Left ventricle myocardium superior (tissue), 1 donor: ENCODE measurements at regions of chr9 and their contacts with region 1.

Region 1: GRCh38 chr9:137129456-137130175 is 9.3 kb upstream of the GRIN1 start:
- DNase-seq: peak; percentile 95
- ATAC-seq: peak; percentile 99

Region 2: GRCh38 chr9:137236238-137236935 is 106.8 kb after region 1 on chr9:
- intact Hi-C with region 1: loop called (anchors 10 kb)
- DNase-seq: peak; percentile 92
- ATAC-seq: peak; percentile 37

Region 3: DNA sequence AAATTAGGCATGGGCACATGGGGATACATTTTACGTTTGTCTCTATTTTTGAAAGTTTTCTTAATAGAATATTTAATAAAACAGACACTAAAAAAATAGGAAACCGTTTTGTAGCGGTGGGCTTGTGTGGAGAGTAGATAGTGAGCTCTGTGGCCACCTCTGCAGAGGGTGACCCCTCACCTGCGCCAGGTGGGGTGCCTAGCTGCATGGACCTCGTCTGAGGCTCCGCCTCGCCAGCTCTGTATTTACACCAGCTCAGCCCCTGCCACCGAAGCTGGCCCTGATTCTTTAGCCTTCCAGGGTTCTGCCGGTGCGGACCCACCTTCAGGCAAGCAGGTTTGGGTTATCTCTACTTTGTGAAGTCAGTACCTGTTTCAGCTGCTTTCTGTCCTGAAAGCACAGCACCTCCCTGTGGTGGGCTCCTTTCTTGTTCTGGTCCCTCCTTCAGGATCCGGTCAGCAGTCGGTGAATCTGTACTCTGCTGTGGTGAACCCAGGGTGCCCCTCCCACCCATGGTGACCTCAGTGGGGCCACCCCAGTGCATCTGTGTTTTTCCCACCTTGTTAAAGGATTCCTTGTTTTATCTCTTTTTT is 642.8 kb after region 1 on chr9:
- intact Hi-C with region 1: no loop called
- DNase-seq: no peak
- ATAC-seq: no peak